Calu3 (cell line): ENCODE measurements at regions of chr2 and their contacts with region 1.

Region 1: GRCh38 chr2:120680136-120680761 is 55.4 kb upstream of the GLI2 start:
- DNase-seq: peak; percentile 84
- H3K4me3 Mint-ChIP-seq: no peak overlapping the region
- H3K27ac Mint-ChIP-seq: peak overlapping the region; percentile 63
- H3K4me1 Mint-ChIP-seq: no peaks in the 10 kb centered on the region
- H3K27me3 Mint-ChIP-seq: peaks cover 73% of the 10 kb centered on the region
- CTCF ChIP-seq: no peak

Region 2: GRCh38 chr2:120552800-120553481 is 127.3 kb before region 1 on chr2:
- CTCF ChIA-PET with region 1: interaction called, 7 read pairs
- intact Hi-C with region 1: loop called (anchors 10 kb)
- DNase-seq: peak; percentile 91
- H3K4me3 Mint-ChIP-seq: peak overlapping the region; percentile 27
- H3K27ac Mint-ChIP-seq: no peak overlapping the region
- H3K4me1 Mint-ChIP-seq: peaks cover 11% of the 10 kb centered on the region
- H3K27me3 Mint-ChIP-seq: peaks cover 58% of the 10 kb centered on the region
- CTCF ChIP-seq: peak; percentile 63

Region 3: DNA sequence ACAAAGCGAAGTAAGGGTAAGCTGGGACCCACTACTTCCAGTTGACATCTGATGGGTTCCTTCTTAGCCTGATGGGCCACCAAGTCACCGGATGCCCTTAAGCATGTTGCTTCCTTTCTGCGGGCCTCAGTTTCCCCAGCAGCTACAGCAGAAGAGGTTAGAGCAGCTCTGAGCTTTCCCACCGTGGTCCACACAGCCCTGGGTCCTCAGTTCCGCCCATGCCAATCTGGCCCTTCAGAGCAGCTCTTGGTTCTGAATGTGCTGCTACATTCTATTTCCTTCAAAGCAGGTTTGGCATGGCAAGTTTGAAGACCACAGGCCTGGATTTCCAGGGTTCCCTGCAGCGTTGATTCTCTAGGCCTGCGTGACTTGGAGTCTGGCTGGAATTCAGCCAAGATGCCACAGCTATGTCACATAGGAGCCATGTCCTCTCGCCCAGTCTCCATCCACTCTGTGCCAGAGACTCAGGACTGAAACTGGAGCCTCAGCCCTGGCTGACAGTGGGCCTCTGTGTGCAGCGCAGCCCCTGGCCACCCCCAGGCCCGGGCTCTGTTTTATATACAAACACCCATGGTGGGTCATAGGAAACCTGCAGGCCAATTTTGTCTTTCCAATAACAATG is 525.2 kb after region 1 on chr2:
- CTCF ChIA-PET with region 1: no interaction called
- intact Hi-C with region 1: no loop called
- DNase-seq: peak; percentile 84
- H3K4me3 Mint-ChIP-seq: no peak overlapping the region
- H3K27ac Mint-ChIP-seq: peak overlapping the region; percentile 47
- H3K4me1 Mint-ChIP-seq: peaks cover 49% of the 10 kb centered on the region
- H3K27me3 Mint-ChIP-seq: no peaks in the 10 kb centered on the region
- CTCF ChIP-seq: no peak